Esophagus squamous epithelium (tissue), 5 donors: ENCODE measurements at regions of chr11 and their contacts with region 1.

Region 1: DNA sequence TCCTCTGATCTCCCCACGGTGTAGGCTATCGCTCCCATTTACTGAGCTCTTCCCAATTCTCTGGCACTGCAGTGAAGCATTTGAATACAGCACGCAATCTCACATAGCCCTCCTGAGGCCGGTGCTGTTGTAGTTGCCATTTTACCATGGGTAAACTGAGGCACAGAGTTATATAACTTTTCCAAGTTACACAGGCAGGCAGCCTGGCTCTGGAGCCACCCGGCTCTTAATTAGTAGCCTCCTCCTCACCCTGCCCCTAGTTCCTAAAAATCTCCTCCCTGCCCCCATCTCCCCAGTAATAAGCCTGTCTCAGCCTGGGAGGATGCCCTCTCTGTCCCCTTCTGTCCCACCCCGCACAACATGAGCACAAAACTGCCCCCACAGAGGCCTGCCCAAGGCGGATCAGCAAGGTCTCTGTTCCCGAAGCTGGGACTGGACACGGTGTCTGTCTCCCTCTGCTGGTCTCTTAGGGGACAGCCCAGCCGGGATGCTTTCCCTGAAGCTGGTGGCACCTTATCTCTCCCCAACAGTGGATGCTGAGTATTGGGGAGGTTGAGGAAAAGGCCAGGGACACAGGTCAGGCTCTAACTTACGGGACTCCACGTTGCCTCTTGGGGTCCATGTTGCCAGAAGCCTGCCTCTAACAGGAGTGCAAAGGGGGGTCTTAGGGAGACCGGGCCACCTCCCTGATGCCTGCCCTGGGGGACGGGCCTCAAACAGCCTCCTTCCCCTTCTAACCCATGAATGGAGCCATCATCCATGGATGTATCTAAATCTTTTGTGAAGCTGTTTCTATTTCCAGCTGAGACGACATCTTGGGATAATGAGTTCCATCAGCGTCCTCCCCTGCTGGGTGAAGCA is 9.1 kb upstream of the CLCF1 start:
- DNase-seq: no peak
- H3K4me3 ChIP-seq: no peak overlapping the region
- H3K27ac ChIP-seq: peak overlapping the region in 2 of 4 donors; percentile 6 to 9
- H3K4me1 ChIP-seq: peaks cover 17 to 65% (median 19%) of the 10 kb centered on the region in 3 donors
- H3K27me3 ChIP-seq: no peaks in the 10 kb centered on the region
- CTCF ChIP-seq: peak; percentile 92 to 98 (median 97)
- POLR2A ChIP-seq: no peak

Region 2: GRCh38 chr11:67303132-67303834 is 79.2 kb before region 1 on chr11 and contains the start of gene SSH3:
- intact Hi-C with region 1: no loop called
- DNase-seq: no peak
- H3K4me3 ChIP-seq: peak within 1 kb of the TSS; percentile 56 to 88 (median 82)
- H3K27ac ChIP-seq: peak within 1 kb of the TSS; percentile 90 to 95 (median 92)
- H3K4me1 ChIP-seq: peaks cover 30 to 55% (median 34%) of the 10 kb centered on the region in 3 donors
- H3K27me3 ChIP-seq: no peaks in the 10 kb centered on the region
- CTCF ChIP-seq: no peak
- POLR2A ChIP-seq: peak in 1 of 4 donors; percentile 73
- total RNA-seq, gene SSH3: 51.4 to 78.4 (median 64.8) TPM

Region 3: GRCh38 chr11:67345920-67346799 is 36.3 kb before region 1 on chr11:
- intact Hi-C with region 1: loop called (anchors 5 kb)
- DNase-seq: no peak
- H3K4me3 ChIP-seq: no peak overlapping the region
- H3K27ac ChIP-seq: peak overlapping the region; percentile 75 to 91 (median 82)
- H3K4me1 ChIP-seq: peaks cover 17 to 61% (median 19%) of the 10 kb centered on the region in 3 donors
- H3K27me3 ChIP-seq: no peaks in the 10 kb centered on the region
- CTCF ChIP-seq: peak in 5 of 6 experiments; percentile 49 to 85 (median 72)
- POLR2A ChIP-seq: peak in 1 of 4 donors; percentile 16

Region 4: DNA sequence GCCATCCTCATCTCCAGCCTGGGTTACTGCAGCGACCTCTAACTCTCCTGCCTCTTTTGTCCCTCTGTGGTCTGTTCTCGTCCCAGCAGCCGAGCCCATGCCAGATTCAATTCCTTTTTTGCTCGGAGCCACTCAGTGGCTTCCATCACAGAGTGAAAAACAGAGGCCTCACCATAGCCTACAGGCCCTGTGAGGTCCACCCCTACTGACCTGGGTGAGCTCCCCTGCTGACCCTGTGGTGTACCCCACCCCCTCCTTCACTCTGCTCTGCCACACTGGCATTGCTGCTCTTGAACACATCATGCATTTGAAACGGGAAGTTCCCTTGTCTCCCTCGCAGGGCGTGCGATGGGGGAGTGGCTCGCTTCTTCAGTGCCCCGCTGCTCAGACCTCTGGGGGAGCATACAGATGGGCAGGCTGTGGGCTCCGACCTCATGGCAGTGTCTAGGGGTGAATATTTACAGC is 102.4 kb after region 1 on chr11:
- intact Hi-C with region 1: no loop called
- DNase-seq: no peak
- H3K4me3 ChIP-seq: peak overlapping the region in 1 of 4 donors; percentile 6
- H3K27ac ChIP-seq: peak overlapping the region in 3 of 4 donors; percentile 65 to 92 (median 91)
- H3K4me1 ChIP-seq: peaks cover 19 to 48% (median 23%) of the 10 kb centered on the region in 3 donors
- H3K27me3 ChIP-seq: no peaks in the 10 kb centered on the region
- CTCF ChIP-seq: no peak
- POLR2A ChIP-seq: no peak